GM13976 (cell line): ENCODE measurements at regions of chr17 and their contacts with region 1.

Region 1: GRCh38 chr17:4969551-4970173 is 2.0 kb upstream of the SPAG7 start:
- DNase-seq: no peak
- CTCF ChIP-seq: no peak

Region 2: GRCh38 chr17:4899341-4900228 is 70.1 kb before region 1 on chr17 and contains the start of gene C17orf107:
- in situ Hi-C with region 1: no loop called
- DNase-seq: peak; percentile 93
- CTCF ChIP-seq: no peak

Region 3: GRCh38 chr17:5065227-5065744 is 95.6 kb after region 1 on chr17:
- in situ Hi-C with region 1: loop called (anchors 10 kb)
- DNase-seq: no peak
- CTCF ChIP-seq: no peak